HCT116 (cell line): ENCODE measurements at regions of chr15 and their contacts with region 1.

Region 1: GRCh38 chr15:32994810-32995424 is 199.6 kb downstream of the FMN1 start:
- DNase-seq: peak; percentile 21
- ATAC-seq: peak; percentile 69
- H3K4me3 ChIP-seq: no peak overlapping the region
- H3K27ac ChIP-seq: no peak overlapping the region
- H3K4me1 ChIP-seq: no peaks in the 10 kb centered on the region
- H3K27me3 ChIP-seq: no peaks in the 10 kb centered on the region
- CTCF ChIP-seq: peak; percentile 27 to 59 (median 40); a peak in 5 of 6 replicates
- POLR2A ChIP-seq: no peak
- RAD21 ChIP-seq: peak; percentile 55

Region 2: DNA sequence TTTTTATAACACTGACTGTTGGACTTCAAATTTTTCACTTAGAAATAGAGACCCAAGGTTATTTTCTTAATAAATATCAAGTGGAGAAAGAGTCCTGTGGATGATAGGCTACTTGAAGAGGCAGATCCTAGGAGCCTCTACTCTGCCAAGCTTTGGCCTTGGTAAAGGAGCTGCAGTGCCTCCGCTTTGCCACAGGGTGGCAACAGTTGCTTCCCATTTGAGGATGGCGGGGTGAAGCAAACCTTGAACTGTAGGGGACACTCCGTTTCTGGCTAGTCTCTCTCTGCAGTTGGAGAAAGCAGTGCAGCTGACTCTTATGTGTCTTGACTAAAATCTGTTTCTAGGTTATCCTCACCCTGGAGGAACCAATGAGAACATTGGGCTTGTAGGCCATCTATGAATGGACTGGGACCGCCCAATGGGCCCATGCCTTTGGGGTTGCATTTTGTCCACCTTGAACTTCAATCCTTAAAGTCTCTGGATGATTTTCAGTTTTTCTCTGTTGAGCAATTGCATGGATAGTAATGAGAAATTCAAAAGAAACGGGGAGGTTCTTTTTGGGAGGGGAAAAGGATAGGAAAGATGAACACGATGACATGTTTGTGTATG is 343.6 kb before region 1 on chr15:
- CTCF ChIA-PET with region 1: interaction called, 7 read pairs
- POLR2A ChIA-PET with region 1: no interaction called
- RAD21 ChIA-PET with region 1: no interaction called
- intact Hi-C with region 1: loop called (anchors 2 kb)
- DNase-seq: peak; percentile 23
- ATAC-seq: peak; percentile 90
- H3K4me3 ChIP-seq: no peak overlapping the region
- H3K27ac ChIP-seq: no peak overlapping the region
- H3K4me1 ChIP-seq: no peaks in the 10 kb centered on the region
- H3K27me3 ChIP-seq: no peaks in the 10 kb centered on the region
- CTCF ChIP-seq: peak; percentile 60 to 96 (median 88); a peak in 5 of 6 replicates
- POLR2A ChIP-seq: no peak
- RAD21 ChIP-seq: peak; percentile 47

Region 3: DNA sequence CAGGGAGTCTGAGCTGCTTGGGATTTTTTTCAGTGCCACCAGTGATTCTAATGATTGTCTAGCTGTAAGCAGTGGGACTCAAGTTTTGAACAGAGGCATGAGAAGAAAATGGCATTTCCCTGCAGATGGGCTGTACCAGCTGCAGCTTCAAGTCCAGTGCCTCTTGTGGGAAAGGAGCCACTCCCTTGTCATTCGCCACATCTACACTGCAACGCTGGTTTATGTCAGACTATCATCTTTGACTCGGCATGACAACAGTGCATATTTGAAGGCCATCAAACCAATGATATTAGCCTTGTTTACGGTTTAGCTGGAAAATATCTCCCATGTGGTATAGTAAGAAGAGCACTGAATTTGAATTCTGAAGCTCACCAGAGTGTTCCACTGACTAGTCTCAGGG is 331.2 kb before region 1 on chr15:
- CTCF ChIA-PET with region 1: interaction called, 47 read pairs
- POLR2A ChIA-PET with region 1: no interaction called
- RAD21 ChIA-PET with region 1: no interaction called
- intact Hi-C with region 1: loop called (anchors 5 kb)
- DNase-seq: no peak
- ATAC-seq: no peak
- H3K4me3 ChIP-seq: no peak overlapping the region
- H3K27ac ChIP-seq: no peak overlapping the region
- H3K4me1 ChIP-seq: no peaks in the 10 kb centered on the region
- H3K27me3 ChIP-seq: no peaks in the 10 kb centered on the region
- CTCF ChIP-seq: no peak
- POLR2A ChIP-seq: no peak
- RAD21 ChIP-seq: no peak

Region 4: DNA sequence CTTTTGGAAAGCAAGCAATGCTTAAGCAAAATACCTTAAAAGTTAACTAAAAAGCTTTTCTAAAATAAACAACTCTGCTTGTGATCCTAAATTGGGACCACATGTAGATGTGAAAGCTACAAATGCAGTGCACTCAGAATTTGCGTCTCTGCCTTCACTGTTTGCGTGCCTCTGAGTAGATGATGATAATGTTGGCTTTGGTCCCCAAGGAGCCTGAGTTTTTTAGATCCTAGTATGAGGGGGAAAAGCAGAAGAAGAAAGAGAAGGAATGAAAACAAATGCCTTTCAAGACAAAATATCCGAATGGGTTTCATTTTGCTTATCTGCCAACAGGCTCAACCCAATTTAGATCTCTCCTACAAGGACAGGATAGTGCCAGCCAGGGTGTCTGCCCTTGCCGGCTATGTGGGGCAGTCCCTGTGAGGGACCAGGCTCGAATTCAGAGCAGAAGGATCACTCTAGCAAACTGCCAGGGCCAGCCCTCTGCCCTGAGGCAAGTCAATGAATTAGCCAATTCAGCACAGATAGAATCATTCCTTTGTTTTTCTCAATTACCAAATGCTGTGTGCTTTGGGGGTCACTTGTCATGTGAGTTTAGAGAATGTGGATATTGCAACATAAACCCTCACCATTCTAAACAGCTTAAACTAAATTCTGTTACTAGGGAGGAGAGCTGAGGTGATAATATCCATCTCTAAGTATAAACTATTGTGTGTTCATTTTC is 324.9 kb before region 1 on chr15:
- CTCF ChIA-PET with region 1: interaction called, 4 read pairs
- POLR2A ChIA-PET with region 1: no interaction called
- RAD21 ChIA-PET with region 1: no interaction called
- intact Hi-C with region 1: loop called (anchors 5 kb)
- DNase-seq: no peak
- ATAC-seq: no peak
- H3K4me3 ChIP-seq: no peak overlapping the region
- H3K27ac ChIP-seq: no peak overlapping the region
- H3K4me1 ChIP-seq: no peaks in the 10 kb centered on the region
- H3K27me3 ChIP-seq: no peaks in the 10 kb centered on the region
- CTCF ChIP-seq: no peak
- POLR2A ChIP-seq: no peak
- RAD21 ChIP-seq: no peak

Region 5: GRCh38 chr15:32844118-32844711 is 150.7 kb before region 1 on chr15:
- CTCF ChIA-PET with region 1: interaction called, 14 read pairs
- POLR2A ChIA-PET with region 1: no interaction called
- RAD21 ChIA-PET with region 1: no interaction called
- intact Hi-C with region 1: no loop called
- DNase-seq: peak; percentile 40
- ATAC-seq: peak; percentile 61
- H3K4me3 ChIP-seq: no peak overlapping the region
- H3K27ac ChIP-seq: no peak overlapping the region
- H3K4me1 ChIP-seq: no peaks in the 10 kb centered on the region
- H3K27me3 ChIP-seq: peaks cover 18% of the 10 kb centered on the region; the same call in 1 of the 2 replicates
- CTCF ChIP-seq: peak; percentile 45 to 69 (median 68); a peak in 5 of 6 replicates
- POLR2A ChIP-seq: no peak
- RAD21 ChIP-seq: peak; percentile 61